Calu3 (cell line): ENCODE measurements at regions of chr18 and their contacts with region 1.

Region 1: DNA sequence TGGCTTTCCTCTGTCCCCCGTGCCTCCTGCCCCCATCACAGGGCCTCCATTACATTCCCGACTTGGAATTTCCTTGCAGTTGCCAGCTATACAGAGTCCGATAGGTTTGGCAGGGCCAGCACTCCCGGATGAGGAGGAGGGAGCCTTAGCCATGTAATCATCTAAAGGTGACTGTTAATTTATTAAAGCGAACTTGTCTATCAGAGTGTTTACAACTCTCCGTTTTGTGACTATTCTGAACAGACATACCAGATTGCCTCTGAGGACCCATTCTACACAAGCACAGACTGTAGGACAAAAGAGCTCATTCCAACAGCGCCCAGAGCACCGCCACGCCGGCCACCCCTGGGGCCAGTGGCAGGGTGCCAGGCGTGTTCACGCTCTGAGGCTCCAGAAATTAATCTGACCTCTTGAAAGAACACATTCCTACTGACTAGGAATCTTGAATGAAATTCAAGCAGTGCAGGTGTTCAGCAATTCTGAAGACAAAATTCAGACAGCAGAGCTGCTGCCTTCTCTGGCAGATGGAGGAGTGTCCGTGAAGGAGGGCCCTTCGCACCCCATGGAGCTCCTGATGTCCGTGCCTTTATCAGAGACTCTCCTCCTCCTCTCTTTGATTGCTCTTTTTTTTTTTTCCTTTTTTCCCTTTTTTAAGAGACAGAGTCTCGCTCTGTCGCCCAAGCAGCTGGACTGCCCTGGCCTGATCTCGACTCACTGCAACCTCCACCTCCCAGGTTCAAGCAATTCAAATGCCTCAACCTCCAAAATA is 58.1 kb upstream of the RALBP1 start:
- DNase-seq: peak; percentile 57
- H3K4me3 Mint-ChIP-seq: peak overlapping the region; percentile 48
- H3K27ac Mint-ChIP-seq: peak overlapping the region; percentile 29
- H3K4me1 Mint-ChIP-seq: peaks cover 23% of the 10 kb centered on the region
- H3K27me3 Mint-ChIP-seq: no peaks in the 10 kb centered on the region
- CTCF ChIP-seq: no peak

Region 2: DNA sequence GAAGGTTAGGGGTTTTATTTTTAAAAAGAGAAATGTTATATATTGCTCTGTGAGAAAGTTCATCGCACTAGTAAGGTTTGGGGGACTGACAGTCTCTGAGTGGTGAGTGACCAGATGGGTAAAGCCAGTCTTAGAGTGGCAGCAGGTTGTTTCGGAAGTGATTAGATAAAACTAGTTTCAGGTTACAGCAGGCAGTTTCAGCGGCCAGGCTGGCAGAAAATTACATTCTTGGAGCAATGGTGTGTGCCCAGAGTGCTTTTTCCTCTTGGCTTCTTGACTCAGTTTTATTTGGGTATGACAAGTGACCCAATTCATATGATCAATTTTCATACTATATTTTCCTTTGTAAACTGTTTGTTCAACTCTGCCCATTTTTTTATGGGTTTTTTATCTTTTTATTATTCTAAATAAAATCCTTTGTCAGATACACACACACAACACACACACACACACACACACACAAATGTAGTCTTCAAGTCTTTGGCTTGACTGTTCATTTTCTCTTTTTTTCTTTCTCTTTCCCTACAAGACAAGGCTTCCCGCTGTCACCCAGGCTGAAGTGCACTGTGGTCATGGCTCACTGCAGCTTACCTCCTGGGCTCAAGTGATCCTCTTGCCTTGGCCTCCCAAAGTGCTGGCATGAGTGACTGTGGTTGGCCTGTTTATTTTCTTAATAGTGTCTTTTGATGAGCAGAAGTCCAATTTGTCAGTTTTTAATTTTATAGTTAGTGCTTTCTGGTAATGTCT is 89.0 kb after region 1 on chr18:
- CTCF ChIA-PET with region 1: no interaction called
- intact Hi-C with region 1: loop called (anchors 10 kb)
- DNase-seq: peak; percentile 49
- H3K4me3 Mint-ChIP-seq: no peak overlapping the region
- H3K27ac Mint-ChIP-seq: peak overlapping the region; percentile 7
- H3K4me1 Mint-ChIP-seq: peaks cover 56% of the 10 kb centered on the region
- H3K27me3 Mint-ChIP-seq: no peaks in the 10 kb centered on the region
- CTCF ChIP-seq: no peak